ENCODE measurements at regions of chr15 and their contacts with region 1.

Region 1: DNA sequence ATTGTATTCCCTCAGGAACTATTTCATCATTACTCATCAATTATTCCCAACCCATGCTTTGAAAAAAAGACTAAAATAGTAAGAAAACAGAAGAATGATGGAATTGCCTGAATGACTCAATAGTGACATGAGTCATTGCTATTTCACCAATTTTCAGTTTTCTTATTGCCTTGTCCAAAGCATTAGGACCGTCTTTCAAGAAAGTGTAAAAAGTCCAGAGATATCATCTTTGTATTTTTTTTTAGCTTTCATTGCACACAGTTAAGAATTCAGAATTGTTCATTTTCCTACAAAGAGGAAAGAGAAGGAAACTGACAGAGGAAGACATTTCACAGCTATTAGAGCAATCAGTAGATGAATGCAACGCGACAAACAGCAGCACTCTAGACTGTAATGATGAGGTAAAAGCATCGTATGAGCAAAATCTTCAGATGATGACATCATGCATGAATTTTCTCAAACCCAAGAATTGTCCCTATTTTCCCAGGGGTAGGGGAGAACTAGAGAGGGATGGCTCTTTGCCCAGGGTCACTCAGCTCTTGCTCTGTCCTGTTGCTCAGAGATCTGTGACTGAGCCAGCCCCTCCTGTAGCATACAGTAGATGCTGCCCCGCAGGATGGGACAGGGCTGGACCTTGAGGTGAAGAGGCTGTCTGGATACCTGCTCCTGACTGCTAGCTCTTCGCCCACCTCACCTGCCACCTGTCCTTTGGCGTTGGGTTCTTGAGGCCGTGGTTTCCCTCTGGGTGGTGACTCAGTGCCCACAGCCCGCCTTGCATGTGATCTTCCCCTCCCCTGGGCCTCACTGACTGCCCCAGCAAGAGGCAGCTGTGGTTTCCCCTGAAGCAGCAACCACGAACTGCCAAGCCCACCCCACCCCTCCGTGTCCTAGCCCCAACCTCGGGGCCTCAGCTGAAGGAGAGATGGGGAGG is 84.8 kb downstream of the PPCDC start:
- DNase-seq: peak; percentile 81
- ATAC-seq: peak; percentile 81
- H3K4me3 Mint-ChIP-seq: no peak overlapping the region
- H3K27ac Mint-ChIP-seq: no peak overlapping the region
- H3K4me1 Mint-ChIP-seq: peaks cover 28% of the 10 kb centered on the region
- H3K27me3 Mint-ChIP-seq: peaks cover 27% of the 10 kb centered on the region

Region 2: GRCh38 chr15:75008629-75009326 is 99.4 kb before region 1 on chr15:
- CTCF ChIA-PET with region 1: no interaction called
- POLR2A ChIA-PET with region 1: no interaction called
- intact Hi-C with region 1: no loop called
- DNase-seq: no peak
- ATAC-seq: no peak
- H3K4me3 Mint-ChIP-seq: no peak overlapping the region
- H3K27ac Mint-ChIP-seq: no peak overlapping the region
- H3K4me1 Mint-ChIP-seq: peaks cover 10% of the 10 kb centered on the region
- H3K27me3 Mint-ChIP-seq: no peaks in the 10 kb centered on the region

Region 3: DNA sequence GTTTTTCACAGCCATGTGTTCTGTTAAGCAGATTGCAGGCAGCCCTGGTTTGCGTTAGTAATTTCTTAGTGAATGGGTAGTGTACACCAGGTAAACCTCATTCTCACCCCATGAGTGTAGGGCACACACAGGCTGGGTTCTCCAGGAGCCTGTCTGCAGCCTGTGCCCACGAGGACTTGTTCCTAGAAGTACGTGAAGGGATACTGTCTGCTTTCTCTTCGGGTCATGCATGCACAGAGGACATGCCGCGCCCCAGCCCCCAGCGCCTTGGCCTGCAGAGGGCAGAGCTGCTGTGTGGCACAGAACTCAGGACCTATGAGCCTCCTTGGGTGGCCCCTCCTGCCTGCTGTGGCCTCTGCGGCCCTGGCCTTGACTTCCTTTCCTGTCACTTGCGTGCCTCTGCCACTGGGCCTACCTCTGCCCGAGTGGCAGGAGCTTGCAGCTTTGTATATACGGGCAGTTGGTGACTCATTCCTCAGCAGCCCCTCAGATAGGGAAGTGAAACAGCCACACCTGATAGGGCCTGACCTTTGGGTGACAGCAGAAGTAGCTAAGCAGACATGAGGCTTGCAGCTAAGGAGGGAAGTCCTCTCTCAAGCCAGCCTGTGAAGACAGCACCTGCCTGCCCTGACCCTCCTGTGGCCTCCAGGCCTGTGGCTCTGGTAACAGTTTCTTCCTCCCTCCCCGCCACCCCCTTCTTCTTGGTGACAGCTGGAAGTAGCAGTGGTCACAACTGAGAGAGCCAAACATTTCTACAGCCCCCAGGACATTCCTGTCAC is 65.3 kb before region 1 on chr15:
- CTCF ChIA-PET with region 1: interaction called, 3 read pairs
- POLR2A ChIA-PET with region 1: no interaction called
- intact Hi-C with region 1: loop called in 1 of 2 experiments (anchors 2 kb)
- DNase-seq: peak; percentile 76
- ATAC-seq: peak; percentile 79
- H3K4me3 Mint-ChIP-seq: no peak overlapping the region
- H3K27ac Mint-ChIP-seq: no peak overlapping the region
- H3K4me1 Mint-ChIP-seq: peaks cover 16% of the 10 kb centered on the region
- H3K27me3 Mint-ChIP-seq: no peaks in the 10 kb centered on the region

Region 4: DNA sequence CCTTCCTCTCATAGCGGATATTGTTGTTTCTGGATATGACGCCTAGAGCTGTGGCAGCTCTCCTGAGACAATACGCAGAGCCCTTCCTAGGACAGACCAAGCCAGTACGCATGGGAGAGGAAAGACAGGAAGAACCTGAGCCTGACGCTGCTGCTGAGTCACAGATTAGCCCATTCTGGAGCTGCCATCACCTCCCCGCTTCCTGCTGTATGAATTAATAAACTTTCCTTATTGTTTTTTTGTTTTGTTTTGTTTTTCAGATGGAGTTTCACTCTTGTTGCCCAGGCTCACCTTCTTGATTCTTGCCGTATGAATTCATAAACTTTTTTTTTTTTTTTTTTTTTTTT is 17.8 kb before region 1 on chr15:
- CTCF ChIA-PET with region 1: interaction called, 6 read pairs
- POLR2A ChIA-PET with region 1: interaction called, 9 read pairs
- intact Hi-C with region 1: loop called (anchors 1 to 2 kb)
- DNase-seq: no peak
- ATAC-seq: no peak
- H3K4me3 Mint-ChIP-seq: no peak overlapping the region
- H3K27ac Mint-ChIP-seq: no peak overlapping the region
- H3K4me1 Mint-ChIP-seq: peaks cover 18% of the 10 kb centered on the region
- H3K27me3 Mint-ChIP-seq: peaks cover 11% of the 10 kb centered on the region

Region 5: DNA sequence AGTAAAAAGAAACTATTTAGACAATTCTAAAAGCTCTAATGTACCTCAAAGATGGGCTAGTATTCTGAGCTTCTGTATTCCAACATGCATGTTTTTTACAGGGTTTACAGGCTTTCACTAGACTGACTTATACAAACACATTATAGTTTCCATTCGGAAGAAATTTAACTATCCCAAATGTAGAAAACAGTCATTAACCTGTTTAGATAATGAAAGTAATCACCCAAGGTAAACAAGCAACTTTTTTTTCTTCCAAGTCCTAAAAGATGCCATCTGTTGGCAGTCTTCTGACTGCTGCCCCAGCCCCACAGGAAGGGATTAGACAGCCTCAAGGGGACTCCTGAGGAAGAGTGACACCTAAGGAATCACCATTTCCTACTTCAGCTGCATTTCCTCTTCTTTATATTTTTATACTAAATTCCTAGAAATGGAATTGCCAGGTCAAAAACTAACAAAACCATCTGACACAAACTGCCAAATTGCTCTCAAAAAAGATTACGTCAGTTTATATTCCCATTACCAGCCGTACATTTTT is 317.9 kb after region 1 on chr15:
- CTCF ChIA-PET with region 1: no interaction called
- POLR2A ChIA-PET with region 1: no interaction called
- intact Hi-C with region 1: no loop called
- DNase-seq: no peak
- ATAC-seq: no peak
- H3K4me3 Mint-ChIP-seq: no peak overlapping the region
- H3K27ac Mint-ChIP-seq: no peak overlapping the region
- H3K4me1 Mint-ChIP-seq: peaks cover 17% of the 10 kb centered on the region
- H3K27me3 Mint-ChIP-seq: no peaks in the 10 kb centered on the region

Measured in activated CD4-positive, alpha-beta T cell treated with anti-CD3 and anti-CD28 coated beads for 36 hours (primary cell).